Activated CD4-positive, alpha-beta T cell treated with anti-CD3 and anti-CD28 coated beads for 36 hours (primary cell): ENCODE measurements at regions of chr19 and their contacts with region 1.

Region 1: GRCh38 chr19:23321948-23322549 is 71.9 kb upstream of the ZNF724 start:
- DNase-seq: no peak
- ATAC-seq: no peak
- H3K4me3 Mint-ChIP-seq: no peak overlapping the region
- H3K27ac Mint-ChIP-seq: no peak overlapping the region
- H3K4me1 Mint-ChIP-seq: peaks cover 4% of the 10 kb centered on the region
- H3K27me3 Mint-ChIP-seq: no peaks in the 10 kb centered on the region

Region 2: GRCh38 chr19:23420824-23421223 is 98.8 kb after region 1 on chr19:
- CTCF ChIA-PET with region 1: no interaction called
- POLR2A ChIA-PET with region 1: no interaction called
- intact Hi-C with region 1: no loop called
- DNase-seq: no peak
- ATAC-seq: no peak
- H3K4me3 Mint-ChIP-seq: no peak overlapping the region
- H3K27ac Mint-ChIP-seq: no peak overlapping the region
- H3K4me1 Mint-ChIP-seq: no peaks in the 10 kb centered on the region
- H3K27me3 Mint-ChIP-seq: peaks cover 10% of the 10 kb centered on the region

Region 3: DNA sequence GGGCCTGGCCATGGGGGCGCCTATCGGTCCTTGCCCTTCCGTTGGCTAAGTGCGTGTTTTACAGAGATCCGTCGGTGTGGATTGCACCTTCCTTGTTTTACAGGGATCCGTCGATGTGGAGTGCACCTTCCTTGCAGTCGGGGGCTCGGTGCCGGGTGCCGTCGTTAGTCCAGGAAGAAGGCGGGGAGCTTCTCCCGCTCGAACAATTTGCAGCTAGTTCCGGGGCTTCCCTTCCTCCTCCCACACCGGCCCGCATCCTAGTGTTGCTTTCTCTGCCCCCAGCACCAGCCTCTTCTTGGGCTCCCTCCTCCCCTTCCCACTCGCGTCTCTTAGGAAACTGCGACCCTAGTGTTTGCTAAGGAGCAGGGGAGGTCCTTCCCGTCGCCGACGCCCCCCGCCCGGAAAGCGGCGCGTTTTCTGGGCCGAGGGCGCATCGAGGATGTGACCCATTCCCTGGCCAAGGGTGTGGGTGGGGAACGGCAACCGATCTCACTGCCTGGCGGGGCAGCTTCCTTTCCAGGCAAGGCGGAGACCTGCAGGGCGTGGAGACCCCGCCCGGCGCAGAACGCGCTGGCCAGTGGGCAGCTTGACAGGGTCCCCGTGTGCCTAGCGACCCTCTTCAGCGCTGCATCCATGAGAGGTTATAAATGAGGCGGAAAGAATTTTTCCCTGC is 149.0 kb after region 1 on chr19:
- CTCF ChIA-PET with region 1: no interaction called
- POLR2A ChIA-PET with region 1: no interaction called
- intact Hi-C with region 1: loop called in 1 of 2 experiments (anchors 1 kb)
- DNase-seq: no peak
- ATAC-seq: no peak
- H3K4me3 Mint-ChIP-seq: no peak overlapping the region
- H3K27ac Mint-ChIP-seq: no peak overlapping the region
- H3K4me1 Mint-ChIP-seq: peaks cover 2% of the 10 kb centered on the region
- H3K27me3 Mint-ChIP-seq: peaks cover 15% of the 10 kb centered on the region

Region 4: DNA sequence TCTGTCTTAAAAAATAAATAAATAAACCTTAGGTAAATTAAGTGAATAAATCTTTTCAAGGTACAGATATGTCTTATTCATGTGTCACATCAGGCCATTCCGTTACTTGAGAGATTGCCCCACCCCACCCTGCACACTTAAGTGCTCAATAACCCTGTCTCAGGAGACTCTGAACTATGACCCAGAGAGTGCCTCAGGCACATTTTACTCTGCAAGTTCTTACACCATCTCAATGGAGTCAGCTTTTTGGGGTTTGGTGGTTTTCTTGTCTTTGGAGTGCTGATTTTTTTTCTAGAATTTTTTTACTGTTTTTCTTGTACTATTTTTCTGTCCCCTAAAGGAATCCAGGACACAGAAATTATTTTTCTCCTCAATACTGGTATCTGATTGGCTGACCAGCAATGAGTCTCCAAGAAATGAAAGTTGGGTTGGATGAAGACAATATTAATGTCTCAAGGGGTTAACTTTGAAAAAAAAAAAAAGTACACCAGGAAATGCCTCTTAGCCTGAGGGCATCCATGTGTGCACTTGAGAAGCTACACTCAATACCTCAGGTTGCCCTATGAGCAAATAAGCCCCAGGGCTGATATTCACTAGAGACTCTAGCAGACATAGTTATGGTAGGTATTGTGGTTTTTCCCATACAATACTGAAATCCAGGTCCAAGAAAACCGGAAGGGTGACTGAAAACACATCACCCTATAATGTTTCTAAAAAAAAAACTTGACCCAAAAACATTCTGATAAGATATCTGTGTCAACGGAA is 187.8 kb after region 1 on chr19:
- CTCF ChIA-PET with region 1: no interaction called
- POLR2A ChIA-PET with region 1: no interaction called
- intact Hi-C with region 1: no loop called
- DNase-seq: no peak
- ATAC-seq: no peak
- H3K4me3 Mint-ChIP-seq: no peak overlapping the region
- H3K27ac Mint-ChIP-seq: no peak overlapping the region
- H3K4me1 Mint-ChIP-seq: no peaks in the 10 kb centered on the region
- H3K27me3 Mint-ChIP-seq: no peaks in the 10 kb centered on the region